HEK293T (cell line): ENCODE measurements at regions of chr11 and their contacts with region 1.

Region 1: GRCh38 chr11:13834463-13834862 is 128.1 kb upstream of the SPON1 start:
- DNase-seq: peak; percentile 63

Region 2: GRCh38 chr11:13771151-13771550 is 63.3 kb before region 1 on chr11:
- CTCF ChIA-PET with region 1: interaction called, 12 read pairs
- POLR2A ChIA-PET with region 1: no interaction called
- DNase-seq: no peak